HEK293T (cell line): ENCODE measurements at regions of chr19 and their contacts with region 1.

Region 1: GRCh38 chr19:38004521-38005223 is 97.7 kb downstream of the SIPA1L3 start:
- DNase-seq: peak; percentile 82

Region 2: DNA sequence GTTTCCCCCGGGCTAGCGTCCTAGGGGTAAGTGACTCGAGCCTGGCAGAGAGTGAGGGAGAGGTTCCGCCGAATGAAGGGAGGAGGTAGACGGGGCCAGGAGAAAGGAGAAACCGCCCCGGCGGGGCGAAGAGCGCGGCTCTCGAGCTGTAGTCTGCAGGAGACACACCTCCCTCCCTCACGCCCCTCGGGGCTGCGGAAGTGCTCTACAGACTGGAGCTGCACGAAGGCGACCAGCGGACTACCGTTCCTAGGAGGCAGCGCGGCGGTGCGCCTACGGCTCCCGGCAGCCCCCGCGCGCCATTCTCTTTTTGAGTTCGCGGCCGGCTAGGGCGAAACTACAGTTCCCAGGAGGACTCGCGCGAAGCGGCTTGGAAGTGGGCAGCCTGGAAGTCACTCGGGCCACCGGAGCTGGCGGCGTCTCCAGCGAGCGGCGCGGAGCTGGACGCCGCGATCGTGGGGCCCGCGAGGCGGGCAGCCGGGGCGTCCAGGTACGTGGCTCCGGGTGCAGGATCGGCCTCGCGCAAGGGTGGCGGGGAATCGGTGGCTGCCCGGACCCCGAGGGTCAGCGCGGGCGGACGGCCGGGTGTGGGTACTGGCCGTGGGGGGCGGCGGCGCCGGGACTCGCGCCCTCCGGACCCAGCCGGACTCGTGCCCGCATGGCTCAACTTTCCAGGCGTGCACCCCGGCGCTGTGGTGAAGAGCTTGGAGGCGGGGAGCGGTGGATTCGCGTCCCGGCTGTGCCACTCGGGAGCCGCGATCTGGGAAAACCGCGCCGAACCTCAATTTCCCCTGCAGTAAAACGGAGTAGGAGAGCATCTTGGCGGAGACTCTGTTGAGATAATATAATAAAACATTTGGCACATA is 97.6 kb before region 1 on chr19 and contains the start of gene SIPA1L3:
- CTCF ChIA-PET with region 1: no interaction called
- POLR2A ChIA-PET with region 1: interaction called, 39 read pairs
- DNase-seq: peak; percentile 88

Region 3: DNA sequence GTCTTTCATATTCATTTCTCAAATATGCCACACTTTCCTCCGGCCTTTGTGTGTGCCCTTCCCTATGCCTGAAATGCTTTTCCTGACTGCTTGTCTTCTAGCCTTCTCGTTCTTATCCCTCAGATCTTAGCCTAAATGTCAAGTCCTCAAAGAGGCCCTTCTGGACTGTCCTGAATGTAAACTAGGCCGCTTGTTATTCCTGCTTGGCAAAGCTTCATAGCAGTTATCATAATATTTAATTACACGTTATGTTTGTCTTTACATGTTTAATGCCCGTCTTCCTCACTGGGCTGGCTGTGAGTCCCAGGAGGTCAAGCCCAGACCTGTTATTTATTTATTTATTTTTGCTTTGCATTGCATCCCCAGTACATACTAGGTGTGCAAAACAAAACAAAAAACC is 35.0 kb before region 1 on chr19:
- CTCF ChIA-PET with region 1: no interaction called
- POLR2A ChIA-PET with region 1: no interaction called
- DNase-seq: no peak

Region 4: GRCh38 chr19:37987356-37988332 is 17.0 kb before region 1 on chr19:
- CTCF ChIA-PET with region 1: interaction called, 6 read pairs
- POLR2A ChIA-PET with region 1: interaction called, 12 read pairs
- DNase-seq: peak; percentile 29

Region 5: DNA sequence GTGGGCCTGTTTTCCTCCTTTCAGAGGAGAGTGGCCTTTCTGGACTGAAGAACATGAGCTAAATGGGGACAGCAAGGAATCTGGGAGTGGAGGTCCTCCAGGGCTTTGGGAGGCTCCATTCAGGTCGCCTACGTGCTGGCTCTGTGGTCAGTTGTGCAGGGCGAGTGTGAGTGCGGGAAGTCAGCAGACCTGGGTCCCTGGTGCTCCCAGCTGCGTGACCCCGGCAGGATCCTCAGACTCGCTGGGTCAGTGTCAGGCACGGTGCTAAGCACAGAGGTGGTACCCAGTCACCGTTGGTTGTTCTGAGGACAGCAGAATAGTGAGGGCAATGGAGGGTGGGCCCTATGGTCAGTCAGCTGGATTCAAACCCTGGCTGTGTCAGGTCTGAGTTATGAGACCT is 11.9 kb before region 1 on chr19:
- CTCF ChIA-PET with region 1: interaction called, 6 read pairs
- POLR2A ChIA-PET with region 1: interaction called, 12 read pairs
- DNase-seq: no peak

Region 6: DNA sequence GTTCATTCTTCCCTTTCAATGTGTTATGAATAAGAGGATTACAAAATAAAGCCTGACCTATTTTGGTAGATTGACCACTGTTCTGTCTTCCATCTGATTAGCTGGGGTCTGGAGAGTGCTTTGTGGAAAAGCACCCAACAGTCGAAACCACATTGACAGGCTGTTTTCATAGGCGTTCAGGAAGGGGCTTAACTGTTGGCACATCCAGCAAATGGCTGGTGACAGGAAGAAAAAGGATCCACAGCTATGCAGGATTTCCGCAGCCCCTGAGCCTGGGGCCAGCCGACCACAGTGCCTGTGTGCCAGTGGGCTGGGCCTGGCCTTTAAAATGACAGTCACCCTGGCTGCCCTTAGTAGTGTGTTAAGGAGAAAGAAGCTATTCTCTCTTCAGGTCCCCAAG is 15.6 kb after region 1 on chr19:
- CTCF ChIA-PET with region 1: no interaction called
- POLR2A ChIA-PET with region 1: interaction called, 13 read pairs
- DNase-seq: no peak